ENCODE measurements at regions of chr3 and their contacts with region 1.

Region 1: GRCh38 chr3:166980103-166980502 is 400.0 kb downstream of the ZBBX start:
- DNase-seq: no peak
- ATAC-seq: no peak

Region 2: GRCh38 chr3:166575166-166575565 is 404.9 kb before region 1 on chr3:
- intact Hi-C with region 1: loop called (anchors 10 kb)
- DNase-seq: no peak
- ATAC-seq: no peak

Region 3: GRCh38 chr3:167001374-167001773 is 21.3 kb after region 1 on chr3:
- intact Hi-C with region 1: no loop called
- DNase-seq: no peak
- ATAC-seq: no peak